ENCODE measurements at regions of chrX and their contacts with region 1.

Region 1: DNA sequence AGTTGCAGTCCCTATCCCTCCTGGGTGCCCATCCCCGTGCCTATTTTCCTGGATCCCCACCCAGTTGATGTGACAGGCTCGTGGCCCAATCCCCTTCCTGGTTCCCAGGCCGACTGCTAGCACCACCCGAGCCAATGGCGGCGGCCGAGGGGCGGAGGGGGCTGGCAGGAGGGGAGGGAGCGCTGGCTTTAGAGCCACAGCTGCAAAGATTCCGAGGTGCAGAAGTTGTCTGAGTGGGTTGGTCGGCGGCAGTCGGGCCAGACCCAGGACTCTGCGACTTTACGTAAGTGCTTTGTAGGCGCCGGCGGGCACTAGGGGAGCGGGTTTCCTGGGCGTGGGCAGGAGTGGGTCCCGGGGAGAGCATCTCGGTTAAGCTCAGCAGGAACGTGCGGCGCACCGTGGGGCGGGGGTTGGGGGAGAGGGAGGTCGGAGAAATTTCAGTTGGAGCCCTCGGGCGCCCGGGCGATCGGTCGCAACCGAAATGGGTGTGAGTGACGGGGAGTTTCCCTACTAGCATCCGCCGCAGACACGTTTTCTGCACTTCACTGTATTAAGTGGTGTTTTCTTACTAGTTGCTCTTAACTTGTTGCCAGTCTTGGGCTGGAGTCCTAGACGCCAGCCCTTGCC is at the start of gene PLS3:
- DNase-seq: peak; percentile 87 to 89
- ATAC-seq: peak; percentile 86 to 96 (median 94)
- H3K4me3 ChIP-seq: peak within 1 kb of the TSS; percentile 39 to 81 (median 72)
- H3K27ac ChIP-seq: peak within 1 kb of the TSS; percentile 83 to 97 (median 94)
- H3K4me1 ChIP-seq: peaks cover 3 to 45% (median 10%) of the 10 kb centered on the region in 9 donors
- H3K27me3 ChIP-seq: peaks cover 0 to 99% (median 0%) of the 10 kb centered on the region in 7 donors
- CTCF ChIP-seq: no peak
- total RNA-seq, gene PLS3: 31.1 to 56.9 (median 39.0) TPM

Region 2: DNA sequence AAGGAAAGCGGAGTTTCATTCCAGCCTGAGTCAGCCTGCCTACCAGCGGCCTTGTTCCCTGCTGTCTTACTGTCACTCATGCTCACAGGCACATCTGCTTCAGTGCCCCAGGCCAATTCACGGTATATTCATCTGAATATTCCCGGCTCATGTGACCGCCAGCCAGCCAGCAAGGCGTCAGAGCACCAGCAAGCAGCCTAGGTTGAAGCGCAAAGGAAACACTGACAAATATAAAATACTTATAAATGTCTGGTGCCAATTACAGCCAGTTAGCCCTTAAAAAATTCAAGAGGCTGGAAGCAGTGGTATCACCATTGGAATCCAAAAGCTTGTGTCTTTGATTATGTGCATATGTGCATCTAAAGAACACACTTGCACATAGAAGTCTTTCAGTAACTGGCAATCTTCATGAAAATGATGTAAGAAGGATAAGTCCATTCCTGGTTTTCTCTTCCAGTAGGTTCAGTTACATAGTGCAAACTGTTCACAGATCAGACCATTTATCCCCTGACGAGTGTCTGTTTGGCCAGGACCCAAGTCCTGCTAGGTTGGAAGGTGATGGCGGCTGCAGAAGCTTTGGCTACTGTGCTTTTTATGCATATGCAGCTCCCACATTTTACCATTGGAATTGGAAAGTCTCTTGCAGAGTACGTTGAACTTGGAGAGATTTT is 210.2 kb before region 1 on chrX:
- intact Hi-C with region 1: loop called in 1 of 10 experiments (anchors 10 kb)
- DNase-seq: no peak
- ATAC-seq: no peak
- H3K4me3 ChIP-seq: no peak overlapping the region
- H3K27ac ChIP-seq: no peak overlapping the region
- H3K4me1 ChIP-seq: peaks cover 0 to 1% (median 0%) of the 10 kb centered on the region in 9 donors
- H3K27me3 ChIP-seq: peaks cover 0 to 50% (median 0%) of the 10 kb centered on the region in 7 donors
- CTCF ChIP-seq: no peak

Region 3: GRCh38 chrX:115459883-115460880 is 100.9 kb before region 1 on chrX:
- intact Hi-C with region 1: loop called in 2 of 10 experiments (anchors 5 to 10 kb)
- DNase-seq: peak in 1 of 2 donors; percentile 14
- ATAC-seq: peak in 7 of 8 donors; percentile 28 to 91 (median 77)
- H3K4me3 ChIP-seq: no peak overlapping the region
- H3K27ac ChIP-seq: peak overlapping the region in 8 of 10 donors; percentile 2 to 67 (median 28)
- H3K4me1 ChIP-seq: peaks cover 0 to 38% (median 7%) of the 10 kb centered on the region in 9 donors
- H3K27me3 ChIP-seq: peaks cover 0 to 58% (median 0%) of the 10 kb centered on the region in 7 donors
- CTCF ChIP-seq: no peak

Region 4: DNA sequence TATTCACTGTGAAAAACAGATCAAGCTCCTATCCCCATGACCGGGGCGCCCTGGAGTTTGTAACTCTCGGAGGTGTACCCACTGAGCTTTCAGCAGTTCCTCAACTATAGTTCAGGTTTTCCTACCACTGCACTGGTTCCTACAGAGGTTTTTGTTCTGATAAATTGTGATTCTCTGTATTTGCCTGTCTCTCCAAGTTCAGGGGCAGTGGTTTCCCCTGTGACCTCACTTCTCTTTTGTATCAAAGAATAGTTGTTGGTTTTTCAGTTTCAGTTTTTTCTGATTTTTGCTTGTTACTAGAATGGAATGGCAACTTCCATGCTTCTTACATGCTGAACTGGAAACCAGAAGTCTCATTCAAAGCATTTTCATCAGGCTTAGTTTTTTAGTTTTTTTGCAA is 56.9 kb before region 1 on chrX:
- intact Hi-C with region 1: no loop called
- DNase-seq: no peak
- ATAC-seq: no peak
- H3K4me3 ChIP-seq: no peak overlapping the region
- H3K27ac ChIP-seq: no peak overlapping the region
- H3K4me1 ChIP-seq: peaks cover 0 to 10% (median 0%) of the 10 kb centered on the region in 9 donors
- H3K27me3 ChIP-seq: peaks cover 0 to 27% (median 0%) of the 10 kb centered on the region in 7 donors
- CTCF ChIP-seq: no peak

Region 5: GRCh38 chrX:115518113-115518512 is 43.0 kb before region 1 on chrX:
- intact Hi-C with region 1: no loop called
- DNase-seq: no peak
- ATAC-seq: no peak
- H3K4me3 ChIP-seq: no peak overlapping the region
- H3K27ac ChIP-seq: no peak overlapping the region
- H3K4me1 ChIP-seq: no peaks in the 10 kb centered on the region
- H3K27me3 ChIP-seq: peaks cover 0 to 17% (median 0%) of the 10 kb centered on the region in 7 donors
- CTCF ChIP-seq: no peak

Region 6: DNA sequence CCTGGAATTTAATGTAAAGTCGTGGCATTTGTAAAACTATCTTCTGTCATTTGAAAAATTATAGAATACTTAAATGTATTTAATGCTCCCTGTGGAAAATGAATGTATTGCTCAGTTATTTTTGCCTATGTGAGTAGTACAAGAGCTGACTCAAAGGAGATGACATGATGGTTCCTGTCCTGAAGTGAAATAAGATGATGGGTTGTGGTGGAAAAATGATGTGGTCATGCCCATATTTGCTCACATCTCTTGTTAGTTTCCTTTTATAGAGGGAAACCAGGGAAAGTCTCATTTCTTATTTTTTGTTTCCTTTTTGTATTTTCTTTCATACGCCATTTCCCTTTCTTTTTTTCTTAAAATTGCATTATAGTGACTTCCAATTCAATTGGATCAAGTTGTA is 23.6 kb after region 1 on chrX:
- intact Hi-C with region 1: no loop called
- DNase-seq: no peak
- ATAC-seq: peak in 1 of 8 donors; percentile 35
- H3K4me3 ChIP-seq: no peak overlapping the region
- H3K27ac ChIP-seq: peak overlapping the region in 7 of 10 donors; percentile 33 to 81 (median 68)
- H3K4me1 ChIP-seq: peaks cover 0 to 66% (median 26%) of the 10 kb centered on the region in 9 donors
- H3K27me3 ChIP-seq: peaks cover 0 to 65% (median 0%) of the 10 kb centered on the region in 7 donors
- CTCF ChIP-seq: no peak

Region 7: DNA sequence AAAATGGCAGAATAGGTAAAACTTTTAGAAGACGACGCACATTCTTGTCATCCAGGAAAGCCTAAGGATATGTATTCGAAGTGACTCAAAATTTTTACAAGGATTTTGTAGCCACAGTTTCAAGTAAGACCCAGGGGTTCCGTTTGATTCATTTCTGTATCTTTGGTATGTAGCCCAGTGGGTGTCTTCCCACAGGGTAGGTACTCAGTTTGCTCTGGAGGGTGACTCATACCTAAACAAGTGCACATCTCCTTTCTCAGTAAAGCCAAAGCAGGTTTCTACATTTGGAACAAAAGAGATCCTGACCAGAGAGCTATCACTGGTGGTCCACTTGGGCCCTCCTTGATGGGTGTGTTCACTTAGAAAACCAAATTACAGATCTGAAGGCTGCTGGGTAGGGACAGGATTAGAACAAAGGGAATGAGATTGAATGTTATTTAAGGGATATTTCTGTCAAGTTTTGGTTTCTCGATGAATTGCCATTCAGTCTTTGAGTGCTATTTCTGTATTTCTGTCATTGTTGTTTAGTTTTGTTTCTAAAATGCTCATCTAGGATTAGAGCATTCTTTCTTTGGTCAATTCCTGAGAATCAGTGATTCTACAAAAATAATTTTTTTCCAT is 56.0 kb after region 1 on chrX:
- intact Hi-C with region 1: loop called in 2 of 10 experiments (anchors 5 to 10 kb)
- DNase-seq: no peak
- ATAC-seq: peak in 3 of 8 donors; percentile 41 to 76 (median 55)
- H3K4me3 ChIP-seq: no peak overlapping the region
- H3K27ac ChIP-seq: peak overlapping the region; percentile 4 to 88 (median 70)
- H3K4me1 ChIP-seq: peaks cover 3 to 74% (median 29%) of the 10 kb centered on the region in 9 donors
- H3K27me3 ChIP-seq: peaks cover 0 to 94% (median 0%) of the 10 kb centered on the region in 7 donors
- CTCF ChIP-seq: no peak

Region 8: GRCh38 chrX:115642895-115643530 is 81.9 kb after region 1 on chrX:
- intact Hi-C with region 1: loop called in 2 of 10 experiments (anchors 5 to 10 kb)
- DNase-seq: peak in 1 of 2 donors; percentile 17
- ATAC-seq: peak in 2 of 8 donors; percentile 55 to 69
- H3K4me3 ChIP-seq: no peak overlapping the region
- H3K27ac ChIP-seq: peak overlapping the region in 6 of 10 donors; percentile 1 to 62 (median 44)
- H3K4me1 ChIP-seq: peaks cover 0 to 34% (median 2%) of the 10 kb centered on the region in 9 donors
- H3K27me3 ChIP-seq: peaks cover 0 to 66% (median 0%) of the 10 kb centered on the region in 7 donors
- CTCF ChIP-seq: peak; percentile 76 to 99 (median 82)

Region 9: GRCh38 chrX:115690511-115691216 is 129.6 kb after region 1 on chrX:
- intact Hi-C with region 1: no loop called
- DNase-seq: peak in 1 of 2 donors; percentile 57
- ATAC-seq: peak in 6 of 8 donors; percentile 64 to 80 (median 68)
- H3K4me3 ChIP-seq: no peak overlapping the region
- H3K27ac ChIP-seq: peak overlapping the region in 3 of 10 donors; percentile 8 to 68 (median 10)
- H3K4me1 ChIP-seq: peaks cover 0 to 7% (median 0%) of the 10 kb centered on the region in 9 donors
- H3K27me3 ChIP-seq: peaks cover 0 to 72% (median 0%) of the 10 kb centered on the region in 7 donors
- CTCF ChIP-seq: peak; percentile 61 to 89 (median 70)